K562 (cell line): ENCODE measurements at regions of chr5 and their contacts with region 1.

Region 1: GRCh38 chr5:431001-431710 is 11.8 kb upstream of the EXOC3 start:
- DNase-seq: peak; percentile 73 to 83 (median 80)
- ATAC-seq: peak; percentile 97
- H3K4me3 ChIP-seq: no peak overlapping the region
- H3K27ac ChIP-seq: no peak overlapping the region
- H3K4me1 ChIP-seq: peaks cover 0 to 51% of the 10 kb centered on the region in 2 experiments; a peak in 2 of 5 replicates
- H3K27me3 ChIP-seq: peaks cover 40 to 85% of the 10 kb centered on the region in 2 experiments
- CTCF ChIP-seq: peak; percentile 80 to 87 (median 86)
- EP300 ChIP-seq: no peak
- POLR2A ChIP-seq: no peak
- RAD21 ChIP-seq: peak; percentile 67 to 87

Region 2: GRCh38 chr5:188488-189481 is 242.4 kb before region 1 on chr5:
- CTCF ChIA-PET with region 1: no interaction called
- POLR2A ChIA-PET with region 1: no interaction called
- in situ Hi-C with region 1: no loop called
- intact Hi-C with region 1: loop called (anchors 5 kb)
- DNase-seq: peak; percentile 92 to 97 (median 94)
- ATAC-seq: peak; percentile 97
- H3K4me3 ChIP-seq: no peak overlapping the region
- H3K27ac ChIP-seq: no peak overlapping the region
- H3K4me1 ChIP-seq: peaks cover 0 to 61% of the 10 kb centered on the region in 2 experiments; a peak in 2 of 5 replicates
- H3K27me3 ChIP-seq: peaks cover 44 to 85% of the 10 kb centered on the region in 2 experiments
- CTCF ChIP-seq: peak; percentile 92 to 96 (median 94)
- EP300 ChIP-seq: no peak
- POLR2A ChIP-seq: no peak
- RAD21 ChIP-seq: peak; percentile 68 to 82

Region 3: DNA sequence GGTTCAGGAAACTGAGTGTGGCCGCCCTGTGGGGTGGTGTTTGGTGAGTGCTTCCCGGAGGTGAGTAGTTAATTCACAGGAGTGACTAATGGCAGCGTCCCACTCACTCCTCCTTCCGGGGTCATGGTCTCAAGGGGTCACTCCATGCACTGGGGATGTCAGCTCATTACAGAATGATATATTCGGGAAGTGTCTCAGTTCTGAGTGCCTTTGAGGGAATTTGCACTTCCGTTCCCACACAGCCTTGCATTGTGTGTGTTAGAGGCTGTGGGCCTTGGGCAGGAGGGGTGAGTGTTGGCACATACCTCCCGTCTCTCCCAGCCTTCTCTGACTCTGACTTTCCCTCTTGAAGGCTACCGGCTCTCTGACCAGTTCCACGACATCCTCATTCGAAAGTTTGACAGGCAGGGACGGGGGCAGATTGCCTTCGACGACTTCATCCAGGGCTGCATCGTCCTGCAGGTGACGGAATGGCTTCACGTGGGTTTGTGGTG is 120.2 kb before region 1 on chr5:
- CTCF ChIA-PET with region 1: no interaction called
- POLR2A ChIA-PET with region 1: no interaction called
- in situ Hi-C with region 1: loop called (anchors 5 kb)
- intact Hi-C with region 1: no loop called
- DNase-seq: no peak
- ATAC-seq: no peak
- H3K4me3 ChIP-seq: no peak overlapping the region
- H3K27ac ChIP-seq: no peak overlapping the region
- H3K4me1 ChIP-seq: peaks cover 0 to 8% of the 10 kb centered on the region in 2 experiments; a peak in 1 of 5 replicates
- H3K27me3 ChIP-seq: no peaks in the 10 kb centered on the region
- CTCF ChIP-seq: no peak
- EP300 ChIP-seq: no peak
- POLR2A ChIP-seq: no peak
- RAD21 ChIP-seq: no peak

Region 4: DNA sequence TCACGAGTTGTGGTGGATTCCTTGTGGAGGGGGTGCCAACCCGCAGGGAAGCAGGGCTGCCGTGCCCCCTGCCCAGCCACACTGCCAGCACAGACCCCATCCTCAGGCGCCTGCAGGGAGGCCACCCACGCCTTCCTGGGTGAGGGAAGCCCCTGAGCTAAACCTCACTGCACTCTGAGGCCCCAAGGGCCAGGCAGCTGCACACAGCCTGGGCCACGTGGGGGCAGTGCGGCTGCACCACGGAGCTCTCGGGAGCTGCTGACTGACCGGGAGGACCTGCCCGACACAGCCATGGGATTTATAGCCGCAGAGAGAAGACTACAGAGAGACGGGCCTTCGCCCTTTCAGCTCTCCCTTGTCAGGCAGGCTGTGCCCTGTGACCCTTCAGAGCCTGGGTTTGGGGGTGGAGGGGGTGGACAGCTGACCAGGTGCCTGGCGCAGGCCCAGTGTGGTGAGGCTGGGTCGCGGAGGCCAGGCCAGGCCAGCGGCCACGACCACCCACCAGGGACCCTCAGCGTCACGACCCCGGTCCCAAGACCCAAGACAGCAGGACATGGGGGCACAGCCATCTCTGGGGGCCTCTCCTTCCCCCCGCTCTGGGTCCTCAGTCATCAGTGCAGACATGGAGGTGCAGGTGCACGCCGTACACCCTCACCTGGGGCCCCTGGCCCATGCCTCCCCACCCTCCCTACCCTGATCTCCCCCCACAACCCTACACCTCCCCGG is 113.9 kb before region 1 on chr5:
- CTCF ChIA-PET with region 1: no interaction called
- POLR2A ChIA-PET with region 1: no interaction called
- in situ Hi-C with region 1: loop called (anchors 5 kb)
- intact Hi-C with region 1: loop called (anchors 1 kb)
- DNase-seq: peak; percentile 66 to 81 (median 74)
- ATAC-seq: peak; percentile 94
- H3K4me3 ChIP-seq: no peak overlapping the region
- H3K27ac ChIP-seq: no peak overlapping the region
- H3K4me1 ChIP-seq: peaks cover 0 to 49% of the 10 kb centered on the region in 2 experiments; a peak in 2 of 5 replicates
- H3K27me3 ChIP-seq: peaks cover 0 to 6% of the 10 kb centered on the region in 2 experiments; a peak in 1 of 5 replicates
- CTCF ChIP-seq: peak; percentile 88 to 90 (median 88)
- EP300 ChIP-seq: no peak
- POLR2A ChIP-seq: 0 out of 2 replicates have a peak, but pooled peaks have one; percentile 30
- RAD21 ChIP-seq: peak; percentile 72 to 86